ENCODE measurements at regions of chr1 and their contacts with region 1.

Region 1: DNA sequence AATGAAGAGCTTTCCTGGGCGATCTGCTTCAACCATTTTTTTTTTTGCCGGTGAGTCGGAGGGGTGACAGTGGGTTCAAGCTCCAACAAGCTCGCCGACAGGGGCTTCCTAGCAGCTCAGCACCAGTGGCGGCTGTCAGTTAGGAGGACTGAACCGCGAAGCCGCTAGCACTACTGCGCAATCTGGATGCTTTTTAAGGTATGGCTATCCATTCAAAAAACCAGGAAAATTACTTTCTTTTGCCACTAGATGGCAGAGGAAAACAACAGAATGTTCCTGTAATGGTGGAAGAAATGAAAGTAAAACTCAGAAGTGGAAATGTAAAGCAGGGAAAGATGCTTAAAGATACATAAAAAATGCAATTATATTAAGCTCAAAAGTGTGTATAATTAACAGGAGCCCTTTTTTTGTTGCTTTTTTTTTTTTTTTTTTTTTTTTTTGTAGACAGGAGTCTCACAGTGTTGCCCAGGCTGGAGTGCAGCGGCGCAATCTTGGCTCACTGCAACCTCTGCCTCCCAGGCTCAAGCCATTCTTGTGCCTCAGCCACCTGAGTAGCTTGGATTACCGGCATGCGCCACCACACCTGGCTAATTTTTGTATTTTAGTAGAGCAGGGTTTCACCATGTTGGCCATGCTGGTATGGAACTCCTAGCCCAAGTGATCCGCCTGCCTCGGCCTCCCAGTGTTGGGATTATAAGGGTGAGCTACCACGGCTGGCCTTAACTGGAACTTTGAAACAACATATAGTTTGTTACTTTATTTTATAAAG is 8.5 kb downstream of the KYAT3 start:
- DNase-seq: peak in 14 of 35 experiments; percentile 10 to 79 (median 23)
- ATAC-seq: peak; percentile 64 to 82 (median 70)
- H3K4me3 ChIP-seq: peak overlapping the region in 1 of 2 donors; percentile 2
- H3K4me3 Mint-ChIP-seq: peak overlapping the region; percentile 18 to 39 (median 38)
- H3K27ac ChIP-seq: peak overlapping the region; percentile 49
- H3K27ac Mint-ChIP-seq: peak overlapping the region; percentile 81 to 92
- H3K4me1 ChIP-seq: peaks cover 2 to 12% of the 10 kb centered on the region in 2 experiments
- H3K4me1 Mint-ChIP-seq: peaks cover 70 to 80% (median 77%) of the 10 kb centered on the region in 3 donors
- H3K27me3 ChIP-seq: no peaks in the 10 kb centered on the region
- H3K27me3 Mint-ChIP-seq: no peaks in the 10 kb centered on the region

Region 2: GRCh38 chr1:88998716-88999115 is 14.7 kb after region 1 on chr1:
- CTCF ChIA-PET with region 1: interaction called, 10 to 32 read pairs
- POLR2A ChIA-PET with region 1: interaction called in 1 of 2 experiments, 9 read pairs
- DNase-seq: peak in 3 of 35 experiments; percentile 26 to 86 (median 36)
- ATAC-seq: peak; percentile 75 to 87 (median 81)
- H3K4me3 ChIP-seq: no peak overlapping the region
- H3K4me3 Mint-ChIP-seq: no peak overlapping the region
- H3K27ac ChIP-seq: no peak overlapping the region
- H3K27ac Mint-ChIP-seq: no peak overlapping the region
- H3K4me1 ChIP-seq: peaks cover under 1 to 19% of the 10 kb centered on the region in 2 experiments
- H3K4me1 Mint-ChIP-seq: peaks cover 34 to 39% (median 38%) of the 10 kb centered on the region in 3 donors
- H3K27me3 ChIP-seq: no peaks in the 10 kb centered on the region
- H3K27me3 Mint-ChIP-seq: no peaks in the 10 kb centered on the region

Region 3: GRCh38 chr1:89065079-89065868 is 81.3 kb after region 1 on chr1 and contains the start of gene GBP1:
- CTCF ChIA-PET with region 1: interaction called, 5 to 13 read pairs
- POLR2A ChIA-PET with region 1: no interaction called
- DNase-seq: peak in 7 of 35 experiments; percentile 5 to 69 (median 15)
- ATAC-seq: peak; percentile 78 to 87 (median 82)
- H3K4me3 ChIP-seq: peak within 1 kb of the TSS; percentile 70 to 77
- H3K4me3 Mint-ChIP-seq: peak within 1 kb of the TSS; percentile 94 to 98 (median 96)
- H3K27ac ChIP-seq: peak within 1 kb of the TSS; percentile 93
- H3K27ac Mint-ChIP-seq: peak within 1 kb of the TSS; percentile 97 to 99
- H3K4me1 ChIP-seq: peaks cover 10 to 27% of the 10 kb centered on the region in 2 experiments
- H3K4me1 Mint-ChIP-seq: peaks cover 61 to 70% (median 64%) of the 10 kb centered on the region in 3 donors
- H3K27me3 ChIP-seq: no peaks in the 10 kb centered on the region
- H3K27me3 Mint-ChIP-seq: no peaks in the 10 kb centered on the region
- total RNA-seq, gene GBP1: 29.5 to 57.8 (median 53.5) TPM

Region 4: GRCh38 chr1:89125913-89126580 is 142.1 kb after region 1 on chr1 and contains the start of gene GBP2:
- CTCF ChIA-PET with region 1: interaction called, 6 to 11 read pairs
- POLR2A ChIA-PET with region 1: no interaction called
- DNase-seq: peak in 7 of 35 experiments; percentile 4 to 63 (median 24)
- ATAC-seq: peak; percentile 78 to 86 (median 83)
- H3K4me3 ChIP-seq: peak within 1 kb of the TSS; percentile 77 to 94
- H3K4me3 Mint-ChIP-seq: peak within 1 kb of the TSS; percentile 92 to 100 (median 94)
- H3K27ac ChIP-seq: peak within 1 kb of the TSS; percentile 74
- H3K27ac Mint-ChIP-seq: peak within 1 kb of the TSS; percentile 98 to 100
- H3K4me1 ChIP-seq: peaks cover 33 to 38% of the 10 kb centered on the region in 2 experiments
- H3K4me1 Mint-ChIP-seq: peaks cover 57 to 66% (median 65%) of the 10 kb centered on the region in 3 donors
- H3K27me3 ChIP-seq: no peaks in the 10 kb centered on the region
- H3K27me3 Mint-ChIP-seq: no peaks in the 10 kb centered on the region
- total RNA-seq, gene GBP2: 82.2 to 226 (median 186) TPM

Region 5: GRCh38 chr1:89598450-89599331 is 614.7 kb after region 1 on chr1:
- CTCF ChIA-PET with region 1: interaction called in 1 of 2 experiments, 10 read pairs
- POLR2A ChIA-PET with region 1: no interaction called
- DNase-seq: peak in 2 of 35 experiments; percentile 35 to 68
- ATAC-seq: peak in 3 of 4 experiments; percentile 50 to 64 (median 57)
- H3K4me3 ChIP-seq: no peak overlapping the region
- H3K4me3 Mint-ChIP-seq: peak overlapping the region in 1 of 3 donors; percentile 4
- H3K27ac ChIP-seq: no peak overlapping the region
- H3K27ac Mint-ChIP-seq: peak overlapping the region; percentile 85 to 87
- H3K4me1 ChIP-seq: peaks cover 18 to 23% of the 10 kb centered on the region in 2 experiments
- H3K4me1 Mint-ChIP-seq: peaks cover 85 to 88% (median 87%) of the 10 kb centered on the region in 3 donors
- H3K27me3 ChIP-seq: no peaks in the 10 kb centered on the region
- H3K27me3 Mint-ChIP-seq: no peaks in the 10 kb centered on the region